MCF 10A (cell line): ENCODE measurements at regions of chr1 and their contacts with region 1.

Region 1: GRCh38 chr1:29793101-29793546 is 556.8 kb downstream of the PTPRU start:
- DNase-seq: peak; percentile 88
- H3K4me3 Mint-ChIP-seq: no peak overlapping the region
- H3K27ac Mint-ChIP-seq: no peak overlapping the region
- H3K4me1 Mint-ChIP-seq: peaks cover 5% of the 10 kb centered on the region
- H3K27me3 Mint-ChIP-seq: no peaks in the 10 kb centered on the region
- CTCF ChIP-seq: peak; percentile 70

Region 2: DNA sequence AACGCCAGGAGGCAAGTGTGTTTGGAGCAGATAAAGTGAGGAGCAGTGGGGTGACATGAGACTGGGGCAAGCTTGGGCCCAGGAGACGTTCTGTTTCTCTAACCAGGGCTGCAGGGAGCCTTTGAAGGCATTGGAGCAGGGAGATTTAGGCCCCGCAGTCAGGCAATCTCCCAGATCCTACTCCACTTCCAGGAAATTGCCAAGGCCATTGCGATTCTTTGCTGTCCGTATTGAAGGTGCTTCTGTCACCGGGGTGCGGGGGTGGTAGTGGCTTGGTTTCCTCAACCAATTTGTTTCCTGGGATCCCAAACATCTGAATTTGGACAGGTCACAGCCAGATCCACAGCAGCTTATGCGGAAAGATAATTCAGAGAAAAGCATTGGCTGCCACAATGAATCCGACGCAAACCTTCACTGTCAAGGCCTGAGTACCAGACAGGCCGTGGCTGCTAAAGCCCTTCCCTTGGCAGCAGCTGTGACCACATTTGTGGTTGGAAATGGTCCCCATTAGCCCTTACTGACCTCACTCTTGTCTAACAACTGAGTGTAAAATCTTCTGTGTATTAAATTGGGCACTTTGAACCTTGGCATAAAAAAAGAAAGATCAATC is 171.2 kb before region 1 on chr1:
- CTCF ChIA-PET with region 1: no interaction called
- POLR2A ChIA-PET with region 1: no interaction called
- intact Hi-C with region 1: no loop called
- DNase-seq: no peak
- H3K4me3 Mint-ChIP-seq: no peak overlapping the region
- H3K27ac Mint-ChIP-seq: no peak overlapping the region
- H3K4me1 Mint-ChIP-seq: no peaks in the 10 kb centered on the region
- H3K27me3 Mint-ChIP-seq: no peaks in the 10 kb centered on the region
- CTCF ChIP-seq: no peak

Region 3: GRCh38 chr1:29703596-29704370 is 89.3 kb before region 1 on chr1:
- CTCF ChIA-PET with region 1: interaction called, 5 read pairs
- POLR2A ChIA-PET with region 1: no interaction called
- intact Hi-C with region 1: loop called (anchors 5 kb)
- DNase-seq: peak; percentile 59
- H3K4me3 Mint-ChIP-seq: no peak overlapping the region
- H3K27ac Mint-ChIP-seq: no peak overlapping the region
- H3K4me1 Mint-ChIP-seq: peaks cover 11% of the 10 kb centered on the region
- H3K27me3 Mint-ChIP-seq: peaks cover 14% of the 10 kb centered on the region
- CTCF ChIP-seq: peak; percentile 79

Region 4: GRCh38 chr1:29856340-29857114 is 63.4 kb after region 1 on chr1:
- CTCF ChIA-PET with region 1: no interaction called
- POLR2A ChIA-PET with region 1: no interaction called
- intact Hi-C with region 1: no loop called
- DNase-seq: no peak
- H3K4me3 Mint-ChIP-seq: no peak overlapping the region
- H3K27ac Mint-ChIP-seq: no peak overlapping the region
- H3K4me1 Mint-ChIP-seq: no peaks in the 10 kb centered on the region
- H3K27me3 Mint-ChIP-seq: peaks cover 56% of the 10 kb centered on the region
- CTCF ChIP-seq: no peak

Region 5: DNA sequence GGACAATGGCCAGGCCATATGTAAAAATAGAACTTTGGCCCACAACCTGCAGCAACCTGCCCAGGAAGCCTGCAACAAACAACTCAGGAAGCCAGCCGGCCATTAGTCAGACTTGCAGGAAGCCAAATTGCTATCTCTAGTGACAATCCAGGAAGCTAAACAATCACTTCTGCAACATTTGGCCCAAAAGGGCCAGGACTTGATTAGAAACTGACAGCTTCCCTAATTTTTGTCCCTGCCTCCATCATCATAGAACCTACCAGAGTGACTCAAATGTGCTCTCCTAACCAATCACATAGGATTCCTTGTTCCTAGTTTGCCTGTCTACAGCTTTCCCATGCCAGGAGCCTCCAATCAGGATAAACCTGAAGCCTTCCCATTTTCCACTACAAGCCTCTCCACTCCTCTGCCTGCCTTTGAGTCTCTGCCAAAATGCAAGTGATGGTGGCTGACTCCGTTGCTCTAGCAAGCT is 82.5 kb after region 1 on chr1:
- CTCF ChIA-PET with region 1: interaction called, 5 read pairs
- POLR2A ChIA-PET with region 1: no interaction called
- intact Hi-C with region 1: loop called (anchors 1 kb)
- DNase-seq: peak; percentile 65
- H3K4me3 Mint-ChIP-seq: no peak overlapping the region
- H3K27ac Mint-ChIP-seq: no peak overlapping the region
- H3K4me1 Mint-ChIP-seq: peaks cover 6% of the 10 kb centered on the region
- H3K27me3 Mint-ChIP-seq: peaks cover 20% of the 10 kb centered on the region
- CTCF ChIP-seq: no peak

Region 6: DNA sequence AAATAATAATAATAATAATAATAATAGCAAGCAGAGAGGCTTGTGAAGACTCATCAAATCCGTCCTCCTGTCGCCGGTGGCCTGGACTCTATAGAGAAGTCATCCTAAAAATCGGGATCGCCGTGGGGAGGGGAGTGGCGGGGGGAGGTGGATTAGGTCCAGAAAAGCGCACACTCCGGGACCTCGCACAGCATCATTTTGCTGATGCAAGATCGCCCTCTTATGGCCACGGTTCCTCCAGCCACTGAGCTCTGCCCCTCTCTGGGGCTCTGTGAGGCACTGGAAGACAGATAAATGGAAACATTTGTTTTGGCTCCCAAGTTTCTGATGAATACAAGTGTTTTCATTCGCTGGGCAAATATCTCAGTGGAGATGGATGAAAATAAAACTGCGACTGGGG is 318.3 kb after region 1 on chr1:
- CTCF ChIA-PET with region 1: interaction called, 12 read pairs
- POLR2A ChIA-PET with region 1: interaction called, 3 read pairs
- intact Hi-C with region 1: loop called (anchors 1 kb)
- DNase-seq: peak; percentile 57
- H3K4me3 Mint-ChIP-seq: no peak overlapping the region
- H3K27ac Mint-ChIP-seq: no peak overlapping the region
- H3K4me1 Mint-ChIP-seq: peaks cover 6% of the 10 kb centered on the region
- H3K27me3 Mint-ChIP-seq: peaks cover 72% of the 10 kb centered on the region
- CTCF ChIP-seq: peak; percentile 67

Region 7: GRCh38 chr1:30707412-30708360 is 914.6 kb after region 1 on chr1:
- CTCF ChIA-PET with region 1: interaction called, 4 read pairs
- POLR2A ChIA-PET with region 1: no interaction called
- intact Hi-C with region 1: loop called (anchors 10 kb)
- DNase-seq: peak; percentile 75
- H3K4me3 Mint-ChIP-seq: no peak overlapping the region
- H3K27ac Mint-ChIP-seq: no peak overlapping the region
- H3K4me1 Mint-ChIP-seq: peaks cover 5% of the 10 kb centered on the region
- H3K27me3 Mint-ChIP-seq: peaks cover 11% of the 10 kb centered on the region
- CTCF ChIP-seq: peak; percentile 97